ENCODE measurements at regions of chr12 and their contacts with region 1.

Region 1: DNA sequence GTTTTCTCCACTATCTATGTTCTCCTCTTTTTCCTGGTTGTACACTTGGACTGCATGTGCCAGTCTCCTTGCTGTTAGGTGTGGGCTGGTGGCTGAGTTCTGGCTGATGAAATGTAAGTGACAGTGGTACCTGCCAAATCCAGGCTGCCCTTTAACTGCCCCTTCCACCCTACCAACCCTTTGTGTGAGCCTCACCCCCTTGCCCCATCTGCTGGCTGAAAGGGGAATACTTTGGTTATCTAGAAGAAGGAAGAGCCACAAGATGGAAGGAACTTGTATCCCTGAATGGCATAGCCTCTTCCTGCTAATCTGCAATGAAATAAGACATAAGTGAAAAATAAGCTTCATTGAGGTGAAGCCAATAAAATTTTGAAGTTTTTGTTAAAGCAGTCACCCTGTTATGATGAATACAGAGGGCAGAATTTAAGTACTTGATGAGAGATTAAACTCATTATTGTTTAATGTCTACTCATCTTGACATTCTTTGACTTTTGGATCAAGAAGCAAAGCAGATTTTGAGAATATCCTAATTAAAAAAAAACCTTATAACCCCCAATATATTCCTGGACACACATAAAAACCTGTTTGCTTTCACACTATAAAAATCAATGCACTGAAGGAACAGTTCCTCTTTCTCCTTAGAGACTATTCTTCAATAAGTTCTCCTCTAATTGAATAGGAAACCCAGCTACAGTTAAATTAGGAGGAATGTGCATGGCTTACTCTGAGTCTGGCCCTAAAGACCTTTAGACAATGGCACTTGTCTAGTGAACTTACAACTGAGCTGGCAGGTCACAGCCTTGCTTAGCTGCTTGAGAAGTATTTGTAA is 262.6 kb upstream of the BTG1 start:
- DNase-seq: peak; percentile 75
- ATAC-seq: peak; percentile 35
- H3K4me3 Mint-ChIP-seq: no peak overlapping the region
- H3K27ac Mint-ChIP-seq: peak overlapping the region; percentile 60
- H3K4me1 Mint-ChIP-seq: peaks cover 53% of the 10 kb centered on the region
- H3K27me3 Mint-ChIP-seq: no peaks in the 10 kb centered on the region

Region 2: DNA sequence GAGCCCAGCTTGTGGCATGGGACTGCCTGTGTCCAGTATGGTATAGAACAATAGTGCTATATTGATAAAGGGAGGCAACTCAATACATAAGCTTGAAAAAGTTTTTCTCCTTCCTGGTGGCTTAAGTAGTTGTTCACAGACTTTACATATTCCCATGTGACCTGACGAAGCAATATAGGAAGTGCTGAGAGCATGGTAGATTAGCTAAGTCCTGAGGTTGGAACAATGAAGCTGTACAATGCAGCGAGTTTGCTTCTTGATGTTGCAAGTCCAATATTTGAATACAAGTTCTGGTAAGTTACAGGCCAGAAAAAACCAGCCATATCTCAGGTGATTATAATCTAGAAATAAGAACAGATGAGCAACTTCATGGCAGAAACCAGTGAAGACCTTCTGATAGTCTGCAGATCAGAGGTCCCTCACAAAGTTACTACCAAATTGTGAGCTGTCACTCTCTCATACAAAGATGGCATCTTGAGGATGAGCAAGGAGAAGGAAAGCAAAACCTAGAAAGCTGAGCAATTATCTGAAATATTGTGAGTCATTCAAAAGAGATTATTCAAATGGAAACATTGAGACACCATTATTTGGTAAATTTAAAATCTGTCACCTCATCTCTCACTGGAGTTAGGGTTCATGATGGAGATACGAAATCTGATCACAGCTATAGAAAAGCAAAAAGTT is 189.8 kb before region 1 on chr12:
- CTCF ChIA-PET with region 1: no interaction called
- POLR2A ChIA-PET with region 1: no interaction called
- intact Hi-C with region 1: loop called in 1 of 2 experiments (anchors 2 kb)
- DNase-seq: no peak
- ATAC-seq: peak; percentile 96
- H3K4me3 Mint-ChIP-seq: peak overlapping the region; percentile 20
- H3K27ac Mint-ChIP-seq: peak overlapping the region; percentile 84
- H3K4me1 Mint-ChIP-seq: peaks cover 24% of the 10 kb centered on the region
- H3K27me3 Mint-ChIP-seq: no peaks in the 10 kb centered on the region

Region 3: DNA sequence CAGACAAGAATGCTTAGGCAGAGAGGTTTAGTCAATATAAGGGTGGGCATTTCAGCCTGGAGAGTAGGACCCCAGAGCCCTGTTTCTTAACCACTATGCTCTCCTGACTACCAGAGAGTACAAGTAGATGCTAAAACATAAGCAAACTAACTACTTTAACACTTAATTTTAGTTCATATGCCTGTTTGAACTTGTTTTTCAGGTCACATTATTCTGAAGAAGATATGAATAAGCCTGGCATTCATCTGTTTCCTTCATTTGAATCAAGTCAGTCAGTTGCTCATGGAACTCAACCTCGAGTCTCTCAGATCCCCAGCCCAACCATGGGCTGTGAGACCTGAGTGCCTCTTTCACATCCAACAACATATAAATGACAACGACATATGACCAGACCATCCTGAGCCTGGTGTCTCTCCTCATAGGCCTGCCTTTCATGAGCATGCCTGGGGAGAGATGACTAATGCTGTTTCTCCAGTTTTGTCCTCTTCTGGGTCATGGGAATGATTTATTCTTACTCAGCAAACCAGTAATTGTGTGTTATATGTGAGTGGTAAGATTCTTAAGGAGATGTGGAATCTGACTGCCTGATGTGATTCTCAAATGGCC is 11.5 kb before region 1 on chr12:
- CTCF ChIA-PET with region 1: interaction called, 11 read pairs
- POLR2A ChIA-PET with region 1: interaction called, 3 read pairs
- intact Hi-C with region 1: no loop called
- DNase-seq: peak; percentile 46
- ATAC-seq: peak; percentile 44
- H3K4me3 Mint-ChIP-seq: no peak overlapping the region
- H3K27ac Mint-ChIP-seq: peak overlapping the region; percentile 95
- H3K4me1 Mint-ChIP-seq: peaks cover 93% of the 10 kb centered on the region
- H3K27me3 Mint-ChIP-seq: no peaks in the 10 kb centered on the region

Region 4: DNA sequence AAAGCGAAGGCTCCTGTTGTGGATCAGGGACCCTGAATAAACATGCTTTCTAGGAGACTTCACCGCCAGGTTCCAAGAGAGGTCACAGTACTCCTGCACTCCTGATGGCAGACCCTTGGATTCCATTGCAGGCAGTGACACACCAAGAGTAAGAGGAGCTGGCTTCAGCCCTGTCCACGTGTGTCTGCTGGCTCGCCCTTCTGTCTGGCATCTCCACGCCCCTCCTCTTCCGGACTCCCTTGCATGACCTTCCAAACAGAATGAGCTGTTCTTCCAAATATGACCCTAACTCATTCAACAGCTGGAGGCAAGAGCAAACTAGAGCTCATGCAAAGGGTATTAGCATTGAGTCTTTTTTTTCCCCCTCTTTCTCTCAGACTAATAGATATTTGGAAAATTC is 61.6 kb after region 1 on chr12:
- CTCF ChIA-PET with region 1: interaction called, 3 read pairs
- POLR2A ChIA-PET with region 1: no interaction called
- intact Hi-C with region 1: loop called (anchors 1 kb)
- DNase-seq: no peak
- ATAC-seq: no peak
- H3K4me3 Mint-ChIP-seq: no peak overlapping the region
- H3K27ac Mint-ChIP-seq: peak overlapping the region; percentile 85
- H3K4me1 Mint-ChIP-seq: peaks cover 48% of the 10 kb centered on the region
- H3K27me3 Mint-ChIP-seq: no peaks in the 10 kb centered on the region

Region 5: DNA sequence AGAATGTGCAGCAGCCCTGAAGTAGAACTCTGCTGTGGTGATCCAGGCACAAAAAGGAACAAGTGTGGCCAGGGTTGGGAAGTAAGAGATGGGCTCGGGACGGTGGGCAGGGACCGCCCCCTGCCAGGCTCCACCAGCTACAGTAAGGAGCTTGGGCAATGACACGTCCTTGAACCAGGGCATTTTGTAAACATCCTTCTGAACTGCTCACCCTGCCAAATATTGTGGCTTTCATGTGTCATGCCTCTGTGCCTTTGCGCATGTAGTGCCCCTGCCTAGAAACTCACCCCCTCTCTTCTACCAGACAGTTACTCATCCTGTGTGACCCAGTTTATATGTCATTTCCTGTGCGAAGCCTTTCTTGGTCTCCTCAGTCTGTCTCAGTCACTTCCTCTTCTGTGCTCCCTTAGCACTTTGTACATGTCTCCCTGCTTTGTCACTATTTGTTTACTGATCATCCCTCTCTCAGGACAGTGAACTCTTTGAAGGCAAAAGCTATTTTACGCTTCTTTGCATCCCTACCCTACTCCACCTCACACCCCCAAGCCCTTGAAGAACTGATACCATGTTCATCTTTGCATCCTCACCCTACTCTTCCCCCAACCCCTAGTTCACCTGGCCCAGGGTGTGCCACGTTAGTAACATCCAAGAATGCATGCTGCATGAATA is 185.6 kb after region 1 on chr12:
- CTCF ChIA-PET with region 1: no interaction called
- POLR2A ChIA-PET with region 1: no interaction called
- intact Hi-C with region 1: loop called in 1 of 2 experiments (anchors 1 kb)
- DNase-seq: peak; percentile 83
- ATAC-seq: peak; percentile 95
- H3K4me3 Mint-ChIP-seq: peak overlapping the region; percentile 5
- H3K27ac Mint-ChIP-seq: peak overlapping the region; percentile 92
- H3K4me1 Mint-ChIP-seq: peaks cover 84% of the 10 kb centered on the region
- H3K27me3 Mint-ChIP-seq: no peaks in the 10 kb centered on the region